ENCODE measurements at regions of chr17 and their contacts with region 1.

Region 1: DNA sequence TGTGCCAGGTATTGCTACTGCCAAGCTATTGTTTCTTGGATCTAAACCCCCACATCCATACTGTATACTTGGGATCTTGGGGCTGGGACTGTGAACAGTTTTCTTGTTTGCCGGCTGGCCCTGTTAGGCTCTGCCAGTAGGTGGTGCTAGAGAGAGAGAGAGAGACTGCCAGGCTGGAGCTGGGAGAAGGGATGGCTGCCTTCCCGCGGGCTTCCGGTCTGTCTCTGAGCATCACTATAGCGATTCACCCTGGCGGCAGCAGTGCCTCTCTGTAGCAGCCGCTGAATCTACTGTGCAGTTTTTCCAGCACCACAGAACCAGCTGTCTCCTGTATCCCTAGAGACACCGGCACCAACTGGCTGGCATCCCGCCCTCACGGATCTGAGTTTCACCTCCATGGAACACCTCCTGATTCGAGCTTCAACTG is 201.2 kb downstream of the UTP18 start:
- DNase-seq: peak; percentile 62
- H3K4me3 Mint-ChIP-seq: no peak overlapping the region
- H3K27ac Mint-ChIP-seq: no peak overlapping the region
- H3K4me1 Mint-ChIP-seq: no peaks in the 10 kb centered on the region
- H3K27me3 Mint-ChIP-seq: peaks cover 2% of the 10 kb centered on the region

Region 2: DNA sequence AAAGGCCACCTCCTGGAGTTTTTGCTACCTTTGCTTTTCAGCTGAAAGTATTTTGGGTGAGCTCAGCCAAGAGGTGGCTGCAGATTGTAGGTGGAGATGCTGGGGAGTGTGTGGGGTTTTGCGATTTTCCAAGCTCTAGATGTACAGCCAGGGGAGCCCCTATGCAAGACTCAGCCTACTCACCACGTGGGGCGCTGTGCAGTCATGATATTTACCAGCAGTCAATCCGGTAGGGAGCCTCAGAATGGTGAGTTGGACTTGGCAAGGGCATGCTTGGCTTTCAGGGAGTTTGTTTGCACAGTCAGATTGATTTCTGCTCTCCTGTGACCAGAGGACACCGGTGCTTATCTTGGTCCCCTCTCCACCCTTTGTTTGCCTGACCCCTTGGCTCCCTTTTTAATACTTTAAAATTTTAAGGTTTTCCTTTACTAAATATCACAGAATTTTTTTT is 25.9 kb before region 1 on chr17:
- CTCF ChIA-PET with region 1: interaction called, 17 read pairs
- POLR2A ChIA-PET with region 1: interaction called, 5 read pairs
- DNase-seq: peak; percentile 75
- H3K4me3 Mint-ChIP-seq: peak overlapping the region; percentile 54
- H3K27ac Mint-ChIP-seq: peak overlapping the region; percentile 80
- H3K4me1 Mint-ChIP-seq: peaks cover 66% of the 10 kb centered on the region
- H3K27me3 Mint-ChIP-seq: no peaks in the 10 kb centered on the region

Region 3: GRCh38 chr17:51472670-51473205 is 11.1 kb after region 1 on chr17:
- CTCF ChIA-PET with region 1: interaction called, 30 read pairs
- POLR2A ChIA-PET with region 1: no interaction called
- DNase-seq: no peak
- H3K4me3 Mint-ChIP-seq: no peak overlapping the region
- H3K27ac Mint-ChIP-seq: no peak overlapping the region
- H3K4me1 Mint-ChIP-seq: no peaks in the 10 kb centered on the region
- H3K27me3 Mint-ChIP-seq: peaks cover 14% of the 10 kb centered on the region

Region 4: DNA sequence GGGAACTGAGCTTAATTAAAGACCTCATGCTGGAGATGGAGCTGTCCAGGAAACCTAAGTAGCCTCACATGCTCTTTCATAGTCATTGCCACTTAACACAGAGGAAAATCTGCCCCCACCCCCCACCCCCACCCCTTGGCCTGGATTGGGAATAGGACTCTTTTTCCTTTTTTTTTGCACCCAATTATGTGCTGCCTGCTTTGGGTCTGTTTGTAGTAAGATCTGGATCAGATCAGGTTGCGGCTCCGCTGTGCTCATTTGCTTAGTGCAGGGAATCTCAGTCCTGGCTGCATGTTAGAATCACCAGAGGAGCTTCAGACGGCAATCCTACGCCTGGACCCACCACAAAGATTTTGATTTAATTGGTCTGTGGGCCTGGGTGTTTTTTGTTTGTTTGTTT is 17.7 kb after region 1 on chr17:
- CTCF ChIA-PET with region 1: interaction called, 14 read pairs
- POLR2A ChIA-PET with region 1: no interaction called
- DNase-seq: no peak
- H3K4me3 Mint-ChIP-seq: no peak overlapping the region
- H3K27ac Mint-ChIP-seq: no peak overlapping the region
- H3K4me1 Mint-ChIP-seq: no peaks in the 10 kb centered on the region
- H3K27me3 Mint-ChIP-seq: peaks cover 13% of the 10 kb centered on the region

Measured in activated CD4-positive, alpha-beta memory T cell treated with anti-CD3 and anti-CD28 coated beads, Interleukin-2, amount 10 ng/mL, durations not matched to agents 7 days and 5 days (primary cell).